CD4-positive, alpha-beta memory T cell (primary cell): ENCODE measurements at regions of chr3 and their contacts with region 1.

Region 1: DNA sequence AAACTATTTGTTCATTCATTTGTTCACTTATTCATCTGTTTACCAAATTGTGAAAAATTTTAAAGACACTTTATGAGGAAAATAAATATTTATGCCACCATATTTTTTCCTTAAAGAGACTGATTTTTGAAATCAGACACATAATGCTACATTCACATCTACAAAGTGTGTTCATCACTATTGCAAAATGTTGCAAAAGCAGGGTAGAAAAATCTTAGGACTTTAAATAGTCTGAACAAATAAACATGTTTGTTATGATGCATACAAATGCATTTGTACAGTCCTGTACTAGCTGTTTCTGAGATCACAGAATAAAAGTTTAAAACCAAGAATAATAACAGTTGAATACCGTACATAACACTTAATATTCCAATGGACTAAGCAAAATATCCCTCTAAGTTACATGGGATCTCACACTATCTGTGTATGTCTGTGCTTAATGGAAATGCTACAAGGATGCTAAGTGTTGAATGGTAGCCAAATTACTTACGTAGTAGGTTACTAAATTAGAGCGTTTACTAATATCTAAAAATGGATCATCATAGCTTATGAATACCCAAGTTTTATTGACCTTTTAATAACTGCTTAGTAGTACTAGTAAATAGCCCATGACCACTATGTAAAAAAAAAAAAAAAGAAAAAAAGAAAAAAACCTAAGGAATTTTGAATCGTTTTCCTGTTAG is 25.1 kb downstream of the ATP11B start:
- DNase-seq: no peak
- H3K4me3 ChIP-seq: no peak overlapping the region
- H3K4me3 Mint-ChIP-seq: no peak overlapping the region
- H3K27ac ChIP-seq: no peak overlapping the region
- H3K27ac Mint-ChIP-seq: peak overlapping the region in 1 of 7 donors; percentile 21
- H3K4me1 ChIP-seq: peaks cover 38% of the 10 kb centered on the region
- H3K4me1 Mint-ChIP-seq: peaks cover 17 to 58% (median 40%) of the 10 kb centered on the region in 4 donors
- H3K27me3 ChIP-seq: no peaks in the 10 kb centered on the region
- H3K27me3 Mint-ChIP-seq: no peaks in the 10 kb centered on the region

Region 2: DNA sequence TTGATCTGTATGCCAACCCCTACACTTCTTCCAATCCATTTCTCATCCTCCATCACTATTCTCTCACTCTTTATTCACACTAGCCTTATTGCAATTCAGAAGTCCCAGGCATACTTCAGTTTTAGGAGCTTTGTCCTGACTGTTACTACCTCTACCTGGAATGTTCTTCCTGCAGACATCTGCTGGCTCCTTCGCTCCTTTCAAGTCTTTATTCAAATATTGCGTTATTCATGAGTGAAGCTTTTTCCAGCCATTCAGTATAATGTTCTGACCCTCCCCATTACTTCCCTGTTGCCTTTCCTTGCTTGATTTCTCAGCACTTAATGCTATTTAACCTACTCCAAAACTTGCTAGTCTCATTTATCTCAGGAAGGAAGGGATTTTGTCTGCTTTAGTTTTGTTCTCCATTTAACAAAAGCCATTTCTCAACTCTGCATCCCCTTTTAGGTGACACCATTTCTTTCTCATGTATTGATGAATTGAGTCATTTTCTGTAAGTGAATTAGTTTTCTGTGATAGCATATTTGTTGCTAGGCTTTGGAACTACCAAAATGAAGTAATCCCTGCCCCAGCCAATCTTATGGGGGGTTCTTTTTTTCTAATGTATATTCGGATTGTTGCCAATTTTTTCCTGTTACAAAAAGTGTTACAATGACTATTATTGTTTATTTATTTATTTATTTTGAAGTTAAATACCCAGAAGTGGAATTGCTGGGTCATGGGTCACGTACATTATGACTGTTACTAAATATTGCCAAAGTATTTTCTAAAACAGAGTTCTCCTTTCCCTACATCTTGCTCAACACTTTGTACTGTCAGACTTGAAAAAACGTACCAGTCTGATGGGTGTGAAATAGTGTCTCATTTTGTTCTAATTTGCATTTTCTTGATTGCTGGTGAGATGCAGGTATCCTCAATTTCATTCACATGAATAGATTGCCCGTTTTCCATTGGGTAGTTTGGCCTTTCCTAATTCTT is 15.7 kb before region 1 on chr3:
- CTCF ChIA-PET with region 1: no interaction called
- POLR2A ChIA-PET with region 1: interaction called, 3 read pairs
- intact Hi-C with region 1: loop called (anchors 2 kb)
- DNase-seq: no peak
- H3K4me3 ChIP-seq: no peak overlapping the region
- H3K4me3 Mint-ChIP-seq: peak overlapping the region in 5 of 8 donors; percentile 12 to 68 (median 23)
- H3K27ac ChIP-seq: no peak overlapping the region
- H3K27ac Mint-ChIP-seq: peak overlapping the region in 1 of 7 donors; percentile 1
- H3K4me1 ChIP-seq: peaks cover 79% of the 10 kb centered on the region
- H3K4me1 Mint-ChIP-seq: peaks cover 47 to 73% (median 54%) of the 10 kb centered on the region in 4 donors
- H3K27me3 ChIP-seq: no peaks in the 10 kb centered on the region
- H3K27me3 Mint-ChIP-seq: no peaks in the 10 kb centered on the region